Posterior vena cava (tissue), 2 donors: ENCODE measurements at regions of chr4 and their contacts with region 1.

Region 1: GRCh38 chr4:41524425-41524824 is 13.5 kb upstream of the LIMCH1 start:
- DNase-seq: no peak

Region 2: GRCh38 chr4:41095973-41096372 is 428.5 kb before region 1 on chr4:
- intact Hi-C with region 1: loop called in 1 of 2 experiments (anchors 5 kb)
- DNase-seq: no peak